Activated B cell treated with CpG ODN at 0.5 μM for 24 hours (primary cell): ENCODE measurements at regions of chr14 and their contacts with region 1.

Region 1: GRCh38 chr14:34331728-34332623 is 130.1 kb downstream of the SPTSSA start:
- DNase-seq: peak; percentile 29
- ATAC-seq: peak; percentile 87
- H3K4me3 Mint-ChIP-seq: peak overlapping the region; percentile 19
- H3K27ac Mint-ChIP-seq: no peak overlapping the region
- H3K4me1 Mint-ChIP-seq: peaks cover 26% of the 10 kb centered on the region
- H3K27me3 Mint-ChIP-seq: no peaks in the 10 kb centered on the region
- CTCF ChIP-seq: no peak

Region 2: GRCh38 chr14:34300882-34301734 is 30.9 kb before region 1 on chr14:
- CTCF ChIA-PET with region 1: no interaction called
- POLR2A ChIA-PET with region 1: no interaction called
- intact Hi-C with region 1: no loop called
- DNase-seq: no peak
- ATAC-seq: no peak
- H3K4me3 Mint-ChIP-seq: no peak overlapping the region
- H3K27ac Mint-ChIP-seq: no peak overlapping the region
- H3K4me1 Mint-ChIP-seq: no peaks in the 10 kb centered on the region
- H3K27me3 Mint-ChIP-seq: no peaks in the 10 kb centered on the region
- CTCF ChIP-seq: no peak

Region 3: GRCh38 chr14:34498684-34499412 is 166.9 kb after region 1 on chr14:
- CTCF ChIA-PET with region 1: interaction called, 4 read pairs
- POLR2A ChIA-PET with region 1: no interaction called
- intact Hi-C with region 1: loop called (anchors 1 kb)
- DNase-seq: no peak
- ATAC-seq: no peak
- H3K4me3 Mint-ChIP-seq: no peak overlapping the region
- H3K27ac Mint-ChIP-seq: no peak overlapping the region
- H3K4me1 Mint-ChIP-seq: no peaks in the 10 kb centered on the region
- H3K27me3 Mint-ChIP-seq: no peaks in the 10 kb centered on the region
- CTCF ChIP-seq: no peak

Region 4: DNA sequence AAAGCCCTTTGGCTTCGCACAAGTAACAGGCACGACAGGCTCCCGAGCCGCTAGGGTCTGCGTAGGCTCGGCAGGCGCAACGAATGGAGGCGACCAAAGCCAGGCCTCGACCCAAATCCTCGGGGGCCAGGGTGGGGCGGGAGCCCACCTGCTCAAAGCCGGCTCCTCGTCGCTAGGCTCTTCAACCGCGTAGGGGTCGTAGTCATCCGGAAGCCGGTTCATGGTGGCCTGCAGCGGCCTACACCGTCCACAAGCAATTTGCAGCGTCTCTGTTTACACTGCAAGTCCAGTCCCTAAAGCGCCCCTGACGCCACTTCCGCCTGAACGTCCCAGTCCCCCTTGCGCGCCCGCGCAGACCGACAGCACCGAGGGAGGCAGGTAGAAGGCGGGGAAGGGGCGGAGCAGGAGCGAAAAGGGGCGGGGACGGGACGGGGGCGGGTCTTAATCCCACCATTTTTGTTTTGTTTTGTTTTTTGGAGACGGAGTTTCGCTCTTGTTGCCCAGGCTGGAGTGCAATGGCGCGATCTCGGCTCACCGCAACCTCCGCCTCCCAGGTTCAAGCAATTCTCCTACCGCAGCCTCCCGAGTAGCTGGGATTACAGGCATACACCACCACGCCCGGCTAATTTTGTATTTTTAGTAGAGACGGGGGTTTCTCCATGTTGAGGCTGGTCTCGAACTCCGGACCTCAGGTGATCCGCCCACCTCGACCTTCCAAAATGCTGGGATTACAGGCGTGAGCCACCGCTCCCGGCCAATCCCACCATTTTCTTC is 207.6 kb after region 1 on chr14 and contains the start of gene EAPP:
- CTCF ChIA-PET with region 1: no interaction called
- POLR2A ChIA-PET with region 1: no interaction called
- intact Hi-C with region 1: loop called (anchors 5 kb)
- DNase-seq: peak; percentile 86
- ATAC-seq: peak; percentile 99
- H3K4me3 Mint-ChIP-seq: peak within 1 kb of the TSS; percentile 99
- H3K27ac Mint-ChIP-seq: peak within 1 kb of the TSS; percentile 97
- H3K4me1 Mint-ChIP-seq: peaks cover 34% of the 10 kb centered on the region
- H3K27me3 Mint-ChIP-seq: no peaks in the 10 kb centered on the region
- CTCF ChIP-seq: no peak
- total RNA-seq, gene EAPP: 40.7 and 43.2 TPM in 2 replicates

Region 5: DNA sequence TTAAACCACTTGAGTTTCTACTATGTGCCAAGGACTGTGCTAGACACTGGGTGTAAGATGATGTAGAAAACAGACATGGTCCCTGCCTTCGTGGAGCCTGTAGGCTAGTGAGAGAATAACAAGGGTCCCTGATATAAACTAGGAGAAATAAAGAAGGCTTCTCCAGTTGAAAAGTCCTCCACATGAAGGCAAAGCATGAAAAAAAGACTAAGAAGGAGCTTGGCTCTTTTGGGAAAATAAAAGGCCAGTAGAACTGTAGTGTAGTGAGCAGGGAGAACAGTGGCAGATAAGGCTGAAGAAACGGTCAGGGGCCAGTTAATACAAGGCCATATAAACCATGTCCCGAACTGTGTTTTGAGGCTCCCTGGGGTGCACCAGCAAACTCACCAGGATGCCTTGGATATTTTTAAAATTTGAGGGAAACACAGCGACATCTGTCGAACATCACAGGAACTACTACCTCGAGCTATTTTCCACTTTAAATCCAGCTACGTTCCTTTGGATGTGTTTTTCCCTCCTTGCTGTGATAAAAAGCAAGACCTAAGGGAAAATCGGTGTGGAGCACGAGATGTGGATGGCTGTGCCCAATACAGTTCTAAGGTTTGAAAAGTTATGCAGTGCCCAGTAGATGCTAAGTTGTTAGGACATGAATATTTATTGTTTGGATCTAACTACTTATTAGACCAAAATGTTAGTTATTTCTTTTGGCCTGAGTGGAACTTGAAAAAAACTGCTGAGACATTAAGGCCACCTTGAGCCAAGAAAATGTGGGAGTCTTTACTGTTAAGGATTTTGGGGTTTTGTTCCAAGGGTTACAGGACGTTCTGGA is 391.0 kb after region 1 on chr14:
- CTCF ChIA-PET with region 1: no interaction called
- POLR2A ChIA-PET with region 1: no interaction called
- intact Hi-C with region 1: loop called (anchors 1 kb)
- DNase-seq: no peak
- ATAC-seq: peak; percentile 37
- H3K4me3 Mint-ChIP-seq: no peak overlapping the region
- H3K27ac Mint-ChIP-seq: no peak overlapping the region
- H3K4me1 Mint-ChIP-seq: peaks cover 4% of the 10 kb centered on the region
- H3K27me3 Mint-ChIP-seq: no peaks in the 10 kb centered on the region
- CTCF ChIP-seq: peak; percentile 78

Region 6: GRCh38 chr14:35423621-35424020 is 1091.6 kb after region 1 on chr14:
- CTCF ChIA-PET with region 1: no interaction called
- POLR2A ChIA-PET with region 1: no interaction called
- intact Hi-C with region 1: loop called (anchors 2 kb)
- DNase-seq: no peak
- ATAC-seq: no peak
- H3K4me3 Mint-ChIP-seq: no peak overlapping the region
- H3K27ac Mint-ChIP-seq: no peak overlapping the region
- H3K4me1 Mint-ChIP-seq: peaks cover 5% of the 10 kb centered on the region
- H3K27me3 Mint-ChIP-seq: no peaks in the 10 kb centered on the region
- CTCF ChIP-seq: no peak